Left cardiac atrium (tissue), 4 donors: ENCODE measurements at regions of chr19 and their contacts with region 1.

Region 1: GRCh38 chr19:52397310-52398080 is at the start of gene ZNF528:
- DNase-seq: peak; percentile 98
- ATAC-seq: peak; percentile 100
- total RNA-seq, gene ZNF528: 13.7 to 17.0 TPM

Region 2: GRCh38 chr19:52453324-52454094 is 56.0 kb after region 1 on chr19 and contains the start of gene ZNF578:
- intact Hi-C with region 1: loop called in 1 of 2 experiments (anchors 2 kb)
- DNase-seq: peak; percentile 90
- ATAC-seq: peak; percentile 99
- total RNA-seq, gene ZNF578: 2.2 to 2.7 TPM

Region 3: GRCh38 chr19:52464798-52465470 is 67.4 kb after region 1 on chr19:
- intact Hi-C with region 1: no loop called
- DNase-seq: no peak
- ATAC-seq: no peak

Region 4: GRCh38 chr19:52622261-52622660 is 224.8 kb after region 1 on chr19:
- intact Hi-C with region 1: no loop called
- DNase-seq: no peak
- ATAC-seq: no peak